ENCODE measurements at regions of chr6 and their contacts with region 1.

Region 1: DNA sequence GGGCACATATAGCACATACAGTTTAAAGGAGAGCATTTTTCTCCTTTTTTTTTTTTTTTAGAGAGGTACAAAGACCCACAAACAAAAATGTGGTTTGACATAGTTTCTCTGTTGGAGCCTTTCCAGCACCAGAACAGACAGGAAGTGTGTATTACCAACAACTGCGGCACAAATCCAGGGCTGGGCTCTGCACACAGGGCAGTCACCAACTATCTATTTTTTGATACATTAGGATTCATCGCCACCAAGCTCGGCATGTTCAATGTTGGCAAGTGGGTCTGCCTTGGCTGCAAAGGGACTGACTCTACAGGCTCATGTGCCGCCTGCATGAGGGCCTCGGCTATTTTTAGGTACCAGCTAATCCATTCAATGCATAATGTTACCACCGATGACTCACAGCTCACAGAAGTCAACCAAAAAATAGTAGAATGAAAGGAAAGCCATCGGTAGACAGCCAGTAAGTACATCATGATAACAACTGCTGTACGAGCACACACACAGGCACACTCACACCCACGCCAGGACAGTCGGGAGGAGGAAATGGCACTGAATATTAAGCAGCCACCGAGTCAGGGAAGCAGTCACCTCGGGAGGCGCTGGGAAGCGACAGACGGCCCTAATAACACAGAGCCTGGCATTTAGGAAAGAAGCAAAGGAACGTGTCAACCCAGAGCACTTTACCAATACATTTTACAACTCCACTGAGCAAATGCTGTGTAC is 81.6 kb downstream of the GMPR start:
- DNase-seq: peak; percentile 83
- ATAC-seq: peak; percentile 62
- H3K4me3 ChIP-seq: peak overlapping the region; percentile 51
- H3K27ac ChIP-seq: peak overlapping the region; percentile 88
- H3K4me1 ChIP-seq: peaks cover 48% of the 10 kb centered on the region
- H3K27me3 ChIP-seq: no peaks in the 10 kb centered on the region
- CTCF ChIP-seq: no peak

Region 2: DNA sequence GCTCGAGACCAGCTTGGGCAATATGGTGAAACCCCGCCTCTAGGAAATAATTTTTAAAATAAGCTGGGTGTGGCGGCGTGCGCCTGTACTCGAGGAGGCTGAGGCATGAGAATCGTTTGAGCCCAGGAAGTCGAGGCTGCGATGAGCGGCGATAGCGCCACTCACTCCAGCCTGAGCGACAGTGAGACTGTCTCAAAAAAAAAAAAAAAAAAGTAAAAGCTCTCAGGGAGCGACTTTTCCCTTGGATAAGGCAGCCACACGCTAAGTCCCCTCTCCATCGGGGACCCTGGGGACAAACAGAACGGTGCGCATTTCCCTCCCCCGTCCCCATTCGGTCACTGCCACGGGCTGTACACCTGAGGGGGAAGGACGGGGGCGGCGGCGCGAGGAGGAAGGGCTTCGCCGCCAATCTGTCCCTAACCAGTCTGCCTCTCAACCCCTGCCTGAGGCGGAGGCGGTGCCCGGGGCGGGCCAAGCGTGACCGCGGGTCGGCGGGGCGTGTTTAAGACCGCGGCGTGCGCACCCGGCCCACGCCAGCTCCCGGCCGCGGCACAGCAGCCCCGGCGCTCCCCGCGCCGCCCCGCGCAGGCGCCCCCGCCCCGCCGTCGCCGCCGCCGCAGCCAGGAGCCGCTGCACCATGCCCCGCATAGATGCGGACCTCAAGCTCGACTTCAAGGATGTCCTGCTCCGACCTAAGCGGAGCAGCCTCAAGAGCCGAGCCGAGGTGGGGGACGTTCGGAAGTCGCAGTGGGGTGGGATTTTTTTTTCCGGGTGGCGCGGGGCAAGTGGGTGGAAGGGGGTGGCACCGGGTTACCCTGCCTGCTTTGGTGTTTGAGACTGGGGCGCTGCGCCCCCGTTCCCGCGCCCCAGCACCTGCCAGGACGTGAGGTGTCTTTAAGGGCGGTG is 81.7 kb before region 1 on chr6 and contains the start of gene GMPR:
- CTCF ChIA-PET with region 1: no interaction called
- POLR2A ChIA-PET with region 1: no interaction called
- intact Hi-C with region 1: loop called (anchors 5 kb)
- DNase-seq: peak; percentile 59
- ATAC-seq: peak; percentile 43
- H3K4me3 ChIP-seq: peak within 1 kb of the TSS; percentile 92
- H3K27ac ChIP-seq: no peak within 1 kb of the TSS
- H3K4me1 ChIP-seq: peaks cover 17% of the 10 kb centered on the region
- H3K27me3 ChIP-seq: 0 out of 2 replicates have a peak, but pooled peaks cover 5% of the 10 kb centered on the region
- CTCF ChIP-seq: no peak
- total RNA-seq, gene GMPR: 5.0 and 5.8 TPM in 2 replicates

Region 3: DNA sequence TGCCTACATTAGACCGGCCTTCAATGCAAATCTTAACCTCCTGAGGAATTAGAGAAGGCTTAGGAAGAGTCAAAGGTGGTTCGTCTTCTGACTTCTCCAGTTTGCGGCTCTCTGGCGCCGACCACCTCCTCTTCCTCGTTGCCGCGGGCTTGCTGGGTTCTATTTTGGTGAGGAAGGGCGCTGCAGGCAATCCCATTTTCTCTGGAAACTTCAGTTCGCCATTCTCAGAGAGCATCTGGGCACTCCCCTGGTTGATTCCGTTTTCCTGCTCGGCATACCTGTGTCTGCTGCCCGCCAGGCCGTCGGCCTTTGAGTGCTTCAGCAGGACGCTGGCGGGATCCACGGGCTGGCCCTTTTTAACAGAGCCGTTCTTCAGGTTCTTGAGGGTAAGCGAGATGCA is 13.6 kb before region 1 on chr6:
- CTCF ChIA-PET with region 1: interaction called, 18 read pairs
- POLR2A ChIA-PET with region 1: no interaction called
- intact Hi-C with region 1: no loop called
- DNase-seq: no peak
- ATAC-seq: no peak
- H3K4me3 ChIP-seq: no peak overlapping the region
- H3K27ac ChIP-seq: no peak overlapping the region
- H3K4me1 ChIP-seq: no peaks in the 10 kb centered on the region
- H3K27me3 ChIP-seq: no peaks in the 10 kb centered on the region
- CTCF ChIP-seq: no peak

Region 4: DNA sequence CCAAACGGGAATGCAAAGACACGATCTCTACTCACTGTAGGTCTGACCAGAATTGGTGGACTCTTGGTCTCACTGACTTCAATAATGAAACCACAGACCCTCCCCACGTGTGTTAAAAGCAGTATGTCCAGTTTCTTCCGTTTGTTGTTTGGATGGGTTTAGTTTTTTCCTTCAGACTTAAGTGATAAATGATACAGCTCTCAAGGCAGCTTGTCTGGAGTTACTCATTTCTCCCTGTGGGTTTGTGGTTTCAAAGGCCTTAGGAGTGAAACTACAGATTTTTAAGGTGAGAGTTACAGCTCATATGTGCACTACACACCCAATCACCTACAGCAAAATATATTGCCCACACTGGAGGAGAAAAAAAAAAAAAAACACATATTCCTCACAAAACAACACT is 695.2 kb after region 1 on chr6:
- CTCF ChIA-PET with region 1: interaction called, 14 read pairs
- POLR2A ChIA-PET with region 1: no interaction called
- intact Hi-C with region 1: no loop called
- DNase-seq: peak; percentile 76
- ATAC-seq: peak; percentile 26; the same call in 1 of the 2 replicates
- H3K4me3 ChIP-seq: no peak overlapping the region
- H3K27ac ChIP-seq: peak overlapping the region; percentile 44
- H3K4me1 ChIP-seq: peaks cover 30% of the 10 kb centered on the region
- H3K27me3 ChIP-seq: no peaks in the 10 kb centered on the region
- CTCF ChIP-seq: no peak

Measured in PC-3 (cell line).